ENCODE measurements at regions of chr1 and their contacts with region 1.

Region 1: DNA sequence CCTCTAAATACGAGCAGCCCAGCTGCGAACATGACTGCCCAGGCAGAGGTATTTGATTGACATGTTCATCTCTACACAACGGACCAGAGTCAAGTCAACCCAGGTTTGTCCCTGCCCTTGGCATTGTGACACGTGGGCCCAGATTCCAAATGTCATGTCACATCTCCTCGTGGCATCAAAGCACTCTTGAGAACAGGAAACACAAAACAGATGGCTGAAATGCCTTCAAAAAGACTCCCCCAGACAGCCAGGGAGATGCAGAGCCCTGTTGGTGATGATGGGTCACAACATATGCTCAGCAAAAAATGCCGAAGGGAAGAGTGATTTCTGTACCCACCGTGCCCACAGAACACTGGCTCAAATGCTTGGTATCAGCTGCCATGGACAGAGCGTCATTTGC is 337.8 kb upstream of the DAB1 start:
- DNase-seq: no peak
- ATAC-seq: no peak
- H3K4me3 Mint-ChIP-seq: no peak overlapping the region
- H3K27ac Mint-ChIP-seq: no peak overlapping the region
- H3K4me1 Mint-ChIP-seq: no peaks in the 10 kb centered on the region
- H3K27me3 Mint-ChIP-seq: peaks cover 10% of the 10 kb centered on the region

Region 2: GRCh38 chr1:57489358-57490036 is 272.1 kb before region 1 on chr1:
- CTCF ChIA-PET with region 1: no interaction called
- POLR2A ChIA-PET with region 1: interaction called, 12 read pairs
- intact Hi-C with region 1: no loop called
- DNase-seq: no peak
- ATAC-seq: no peak
- H3K4me3 Mint-ChIP-seq: no peak overlapping the region
- H3K27ac Mint-ChIP-seq: no peak overlapping the region
- H3K4me1 Mint-ChIP-seq: no peaks in the 10 kb centered on the region
- H3K27me3 Mint-ChIP-seq: peaks cover 2% of the 10 kb centered on the region

Region 3: DNA sequence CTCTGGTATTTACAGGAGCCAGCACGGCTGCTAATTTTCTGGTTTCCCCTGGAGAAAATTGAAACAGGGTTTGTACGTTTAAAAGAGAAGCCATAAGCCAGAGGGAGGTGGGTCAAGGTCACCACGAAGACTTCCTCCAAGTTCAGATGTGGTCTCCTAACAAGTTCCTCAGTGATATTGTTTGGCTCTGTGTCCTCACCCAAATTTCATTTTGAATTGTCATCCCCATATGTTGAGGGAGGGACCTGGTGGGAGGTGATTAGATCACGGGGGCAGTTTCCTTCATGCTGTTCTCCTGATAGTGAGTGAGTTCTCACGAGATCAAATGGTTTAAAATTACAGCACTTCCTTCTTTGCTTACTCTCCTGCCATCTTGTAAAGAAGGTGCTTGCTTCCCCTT is 42.4 kb before region 1 on chr1:
- CTCF ChIA-PET with region 1: no interaction called
- POLR2A ChIA-PET with region 1: no interaction called
- intact Hi-C with region 1: no loop called
- DNase-seq: no peak
- ATAC-seq: no peak
- H3K4me3 Mint-ChIP-seq: no peak overlapping the region
- H3K27ac Mint-ChIP-seq: no peak overlapping the region
- H3K4me1 Mint-ChIP-seq: no peaks in the 10 kb centered on the region
- H3K27me3 Mint-ChIP-seq: no peaks in the 10 kb centered on the region

Measured in activated CD4-positive, alpha-beta T cell treated with anti-CD3 and anti-CD28 coated beads for 36 hours (primary cell).